ENCODE measurements at regions of chr5 and their contacts with region 1.

Region 1: GRCh38 chr5:74517700-74518099 is 122.8 kb downstream of the ENC1 start:
- DNase-seq: no peak
- ATAC-seq: no peak
- H3K4me3 ChIP-seq: no peak overlapping the region
- H3K27ac ChIP-seq: no peak overlapping the region
- H3K4me1 ChIP-seq: no peaks in the 10 kb centered on the region
- H3K27me3 ChIP-seq: no peaks in the 10 kb centered on the region
- CTCF ChIP-seq: no peak

Region 2: GRCh38 chr5:74143721-74144330 is 373.9 kb before region 1 on chr5:
- CTCF ChIA-PET with region 1: no interaction called
- POLR2A ChIA-PET with region 1: interaction called, 17 read pairs
- in situ Hi-C with region 1: no loop called
- intact Hi-C with region 1: no loop called
- DNase-seq: no peak
- ATAC-seq: no peak
- H3K4me3 ChIP-seq: no peak overlapping the region
- H3K27ac ChIP-seq: no peak overlapping the region
- H3K4me1 ChIP-seq: no peaks in the 10 kb centered on the region
- H3K27me3 ChIP-seq: no peaks in the 10 kb centered on the region
- CTCF ChIP-seq: no peak

Region 3: GRCh38 chr5:74336297-74336696 is 181.4 kb before region 1 on chr5:
- CTCF ChIA-PET with region 1: no interaction called
- POLR2A ChIA-PET with region 1: no interaction called
- in situ Hi-C with region 1: no loop called
- intact Hi-C with region 1: no loop called
- DNase-seq: no peak
- ATAC-seq: no peak
- H3K4me3 ChIP-seq: no peak overlapping the region
- H3K27ac ChIP-seq: no peak overlapping the region
- H3K4me1 ChIP-seq: no peaks in the 10 kb centered on the region
- H3K27me3 ChIP-seq: no peaks in the 10 kb centered on the region
- CTCF ChIP-seq: peak; percentile 31; the same call in 1 of the 2 replicates

Measured in Panc1 (cell line).